CD4-positive, alpha-beta memory T cell (primary cell): ENCODE measurements at regions of chr10 and their contacts with region 1.

Region 1: GRCh38 chr10:76492026-76492425 is 1060.6 kb downstream of the LRMDA start:
- DNase-seq: no peak
- H3K4me3 ChIP-seq: no peak overlapping the region
- H3K4me3 Mint-ChIP-seq: no peak overlapping the region
- H3K27ac ChIP-seq: no peak overlapping the region
- H3K27ac Mint-ChIP-seq: no peak overlapping the region
- H3K4me1 ChIP-seq: no peaks in the 10 kb centered on the region
- H3K4me1 Mint-ChIP-seq: no peaks in the 10 kb centered on the region
- H3K27me3 ChIP-seq: no peaks in the 10 kb centered on the region
- H3K27me3 Mint-ChIP-seq: no peaks in the 10 kb centered on the region

Region 2: DNA sequence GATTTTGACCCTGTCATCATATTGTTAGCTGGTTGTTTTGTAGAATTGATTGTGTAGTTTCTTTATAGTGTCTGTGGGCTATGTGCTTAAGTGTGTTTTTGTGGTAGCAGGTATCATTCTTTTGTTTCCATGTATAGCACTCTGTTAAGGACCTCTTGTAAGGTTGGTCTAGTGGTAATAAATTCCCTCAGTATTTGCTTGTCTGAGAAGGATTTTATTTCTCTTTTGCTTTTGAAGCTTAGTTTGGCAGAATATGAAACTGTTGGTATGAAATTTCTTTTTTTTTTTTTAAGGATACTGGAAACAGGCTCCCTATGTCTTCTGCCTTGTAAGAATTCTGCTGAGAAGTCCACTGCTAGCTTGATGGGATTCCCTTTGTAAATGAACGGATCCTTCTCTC is 12.8 kb after region 1 on chr10:
- CTCF ChIA-PET with region 1: interaction called, 3 read pairs
- POLR2A ChIA-PET with region 1: no interaction called
- intact Hi-C with region 1: loop called (anchors 1 kb)
- DNase-seq: no peak
- H3K4me3 ChIP-seq: no peak overlapping the region
- H3K4me3 Mint-ChIP-seq: no peak overlapping the region
- H3K27ac ChIP-seq: no peak overlapping the region
- H3K27ac Mint-ChIP-seq: no peak overlapping the region
- H3K4me1 ChIP-seq: no peaks in the 10 kb centered on the region
- H3K4me1 Mint-ChIP-seq: no peaks in the 10 kb centered on the region
- H3K27me3 ChIP-seq: no peaks in the 10 kb centered on the region
- H3K27me3 Mint-ChIP-seq: no peaks in the 10 kb centered on the region